ENCODE measurements at regions of chr12 and their contacts with region 1.

Region 1: DNA sequence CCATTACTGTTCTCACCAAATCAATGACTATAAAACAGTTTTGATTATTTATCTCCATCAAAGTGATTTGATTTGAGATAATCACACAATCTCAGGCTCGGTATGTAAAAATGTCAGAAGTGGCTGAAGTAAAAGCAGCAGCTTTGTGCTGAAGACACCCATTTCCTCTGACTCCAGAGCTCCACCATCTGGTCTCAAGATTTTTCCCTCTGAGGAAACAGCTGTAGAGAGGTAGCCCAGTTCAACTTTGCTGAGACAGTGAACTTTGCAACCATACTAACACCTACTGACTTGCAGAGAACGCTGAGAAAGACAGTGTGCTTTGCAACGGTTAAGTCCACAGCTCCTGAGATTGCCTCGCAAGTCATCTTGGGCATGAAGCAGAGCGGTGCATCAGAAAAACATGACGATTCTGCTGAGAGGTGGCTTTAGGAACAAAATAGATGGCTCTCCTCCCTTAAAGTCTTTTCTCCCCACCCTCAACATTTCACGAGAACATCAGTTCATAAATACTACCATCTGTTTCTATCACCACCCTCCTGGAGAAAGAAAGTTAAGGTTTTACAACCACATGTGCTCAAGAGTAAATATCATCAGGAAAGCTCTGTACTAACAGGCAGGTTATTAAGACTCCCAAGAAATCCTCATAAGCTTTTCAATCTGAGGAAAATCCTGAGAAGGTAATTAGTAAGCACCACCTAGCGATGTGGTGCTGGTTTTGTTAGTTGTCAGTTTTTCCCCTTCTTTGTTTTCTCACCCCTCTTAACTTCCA is 34.8 kb downstream of the HIGD1C start:
- DNase-seq: no peak
- ATAC-seq: peak; percentile 75

Region 2: GRCh38 chr12:50763639-50764285 is 223.4 kb before region 1 on chr12 and contains the start of gene ATF1:
- intact Hi-C with region 1: loop called (anchors 5 kb)
- DNase-seq: peak; percentile 95
- ATAC-seq: peak; percentile 96
- total RNA-seq, gene ATF1: 29.2 TPM

Region 3: GRCh38 chr12:50825372-50825838 is 161.7 kb before region 1 on chr12:
- intact Hi-C with region 1: loop called (anchors 2 kb)
- DNase-seq: no peak
- ATAC-seq: peak; percentile 75

Region 4: GRCh38 chr12:50924439-50925341 is 62.5 kb before region 1 on chr12:
- intact Hi-C with region 1: loop called (anchors 2 kb)
- DNase-seq: peak; percentile 89
- ATAC-seq: peak; percentile 96

Region 5: GRCh38 chr12:50929831-50930230 is 57.3 kb before region 1 on chr12:
- intact Hi-C with region 1: loop called (anchors 2 kb)
- DNase-seq: no peak
- ATAC-seq: no peak

Measured in Right ventricle myocardium inferior (tissue), 1 donor.